ENCODE measurements at regions of chr6 and their contacts with region 1.

Region 1: DNA sequence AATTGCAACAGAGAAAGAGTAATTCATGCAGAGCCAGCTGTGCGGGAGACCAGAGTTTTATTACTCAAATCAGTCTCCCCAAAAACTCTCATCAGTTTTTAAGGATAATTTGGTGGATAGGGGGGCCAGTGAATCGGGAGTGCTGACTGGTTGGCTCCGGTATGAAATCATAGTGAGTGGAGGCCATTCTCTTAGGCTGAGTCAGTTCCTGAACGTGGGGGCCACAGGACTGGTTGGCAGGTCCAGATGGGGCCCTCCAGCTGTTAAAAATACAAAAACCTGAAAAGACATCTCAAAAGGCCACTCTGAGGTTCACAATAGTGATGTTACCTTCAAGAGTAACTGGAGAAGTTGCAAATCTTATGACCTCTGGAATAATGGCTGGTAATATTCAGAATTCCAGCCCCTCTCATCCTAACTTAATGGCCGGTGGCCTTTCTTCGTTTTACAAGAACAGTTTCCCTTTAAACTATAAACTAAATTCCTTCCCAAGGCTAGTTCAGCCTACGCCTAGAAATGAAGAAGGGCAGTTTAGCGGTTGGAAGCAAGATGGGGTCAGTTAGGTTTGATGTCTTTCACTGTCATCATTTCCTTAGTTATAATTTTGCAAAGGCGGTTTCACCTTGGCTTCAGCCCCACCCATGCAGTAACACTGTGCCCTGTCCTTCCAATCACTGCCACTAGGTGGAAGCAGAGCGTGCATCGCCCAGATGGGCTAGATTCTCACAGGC is 6.8 kb upstream of the MICA start:
- DNase-seq: peak; percentile 82 to 85
- H3K4me3 ChIP-seq: no peak overlapping the region
- H3K27ac ChIP-seq: no peak overlapping the region
- H3K4me1 ChIP-seq: peaks cover 4 to 8% of the 10 kb centered on the region in 2 donors
- H3K27me3 ChIP-seq: no peaks in the 10 kb centered on the region
- CTCF ChIP-seq: peak; percentile 69 to 93 (median 87)
- POLR2A ChIP-seq: no peak

Region 2: DNA sequence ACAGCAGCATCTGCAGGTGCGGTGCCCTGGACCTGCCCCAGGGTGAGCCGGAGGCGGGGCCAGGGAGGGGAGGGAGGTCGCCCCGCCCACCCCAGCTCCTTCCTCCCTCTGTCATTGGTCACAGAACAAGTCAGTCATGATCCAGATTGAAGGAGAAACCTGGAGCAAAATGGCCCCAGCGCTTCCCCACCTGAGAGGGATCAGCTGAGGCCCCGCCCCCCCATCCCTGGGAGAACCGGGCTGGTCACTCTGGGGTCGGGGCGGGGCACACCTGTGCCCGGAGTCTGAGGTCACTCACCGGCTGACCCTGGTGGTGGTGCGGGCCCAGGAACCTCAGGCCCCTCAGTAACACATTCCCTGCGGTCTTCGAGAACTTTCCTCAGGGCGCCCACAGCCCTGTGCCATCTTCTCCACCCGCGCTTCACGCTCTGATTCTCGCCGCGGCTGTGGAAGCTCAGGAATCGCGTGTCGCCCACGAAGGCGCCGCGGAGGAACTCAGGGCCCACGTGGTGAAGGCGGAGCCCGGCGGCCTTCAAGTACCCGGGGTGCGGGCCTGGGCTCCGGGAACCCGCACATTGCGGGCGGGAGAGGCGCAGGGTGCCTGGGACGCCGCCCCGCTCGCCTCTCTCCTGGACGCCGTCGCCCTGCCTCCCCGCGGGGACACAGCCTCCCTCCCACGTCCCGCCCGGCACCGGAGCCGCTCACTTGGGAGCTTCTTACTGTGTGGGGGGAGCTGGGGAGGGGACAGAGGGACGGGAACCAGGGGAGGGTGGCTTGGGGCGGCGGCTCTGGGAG is 88.3 kb before region 1 on chr6:
- intact Hi-C with region 1: no loop called
- DNase-seq: peak; percentile 77 to 87
- H3K4me3 ChIP-seq: peak overlapping the region in 1 of 3 donors; percentile 21
- H3K27ac ChIP-seq: no peak overlapping the region
- H3K4me1 ChIP-seq: peaks cover 0 to 11% of the 10 kb centered on the region in 2 donors
- H3K27me3 ChIP-seq: no peaks in the 10 kb centered on the region
- CTCF ChIP-seq: no peak
- POLR2A ChIP-seq: no peak

Region 3: DNA sequence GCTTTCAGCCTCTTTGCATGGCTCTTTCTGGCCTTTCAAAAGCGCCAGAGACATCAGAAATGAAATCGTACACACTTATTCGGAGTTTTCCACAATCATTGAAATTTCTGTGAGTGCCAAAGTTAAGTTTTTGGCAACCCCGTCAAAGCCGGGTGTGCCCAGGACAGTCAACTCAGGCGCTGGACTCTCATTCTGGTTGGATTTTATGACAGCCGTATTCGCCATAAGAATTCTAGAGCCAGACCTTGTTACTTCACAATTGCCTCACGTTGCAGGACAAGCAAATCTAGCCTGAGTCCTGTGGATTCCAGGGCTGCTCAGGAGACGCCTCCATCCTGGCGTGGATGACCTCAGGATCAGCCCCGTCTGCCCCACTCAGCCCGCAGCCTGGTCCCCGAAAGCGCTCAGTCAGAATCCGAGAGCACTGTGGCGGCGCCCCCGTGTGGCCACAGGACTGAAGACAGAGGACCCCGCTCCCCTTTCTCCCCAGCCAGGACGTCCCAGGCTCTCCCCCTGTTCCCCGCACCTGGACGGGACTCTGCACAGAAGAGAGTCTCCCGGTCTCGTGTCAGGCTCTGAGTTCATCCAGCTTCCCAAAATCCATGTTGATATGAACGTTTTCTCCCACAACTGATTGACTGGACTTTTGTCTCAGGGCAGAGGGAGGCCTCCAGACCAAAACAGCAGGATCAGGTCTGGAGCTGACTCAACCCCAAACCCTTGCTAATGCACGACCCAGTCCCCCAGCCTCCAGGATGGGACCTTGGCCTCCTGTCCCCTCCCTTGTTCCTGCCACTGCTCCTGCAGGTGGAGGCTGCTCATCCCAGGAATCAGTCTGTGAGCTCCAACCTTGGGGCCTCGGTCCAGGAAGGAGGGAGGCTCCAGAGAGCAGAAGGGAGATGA is 45.0 kb after region 1 on chr6:
- intact Hi-C with region 1: loop called (anchors 2 kb)
- DNase-seq: peak; percentile 77 to 85
- H3K4me3 ChIP-seq: no peak overlapping the region
- H3K27ac ChIP-seq: no peak overlapping the region
- H3K4me1 ChIP-seq: no peaks in the 10 kb centered on the region
- H3K27me3 ChIP-seq: no peaks in the 10 kb centered on the region
- CTCF ChIP-seq: peak; percentile 54 to 91 (median 72)
- POLR2A ChIP-seq: no peak

Region 4: GRCh38 chr6:31502586-31502985 is 106.0 kb after region 1 on chr6:
- intact Hi-C with region 1: no loop called
- DNase-seq: no peak
- H3K4me3 ChIP-seq: no peak overlapping the region
- H3K27ac ChIP-seq: no peak overlapping the region
- H3K4me1 ChIP-seq: no peaks in the 10 kb centered on the region
- H3K27me3 ChIP-seq: no peaks in the 10 kb centered on the region
- CTCF ChIP-seq: no peak
- POLR2A ChIP-seq: no peak

Measured in thyroid gland (tissue), 4 donors.